Activated CD8-positive, alpha-beta T cell treated with anti-CD3 and anti-CD28 coated beads for 36 hours (primary cell): ENCODE measurements at regions of chr11 and their contacts with region 1.

Region 1: DNA sequence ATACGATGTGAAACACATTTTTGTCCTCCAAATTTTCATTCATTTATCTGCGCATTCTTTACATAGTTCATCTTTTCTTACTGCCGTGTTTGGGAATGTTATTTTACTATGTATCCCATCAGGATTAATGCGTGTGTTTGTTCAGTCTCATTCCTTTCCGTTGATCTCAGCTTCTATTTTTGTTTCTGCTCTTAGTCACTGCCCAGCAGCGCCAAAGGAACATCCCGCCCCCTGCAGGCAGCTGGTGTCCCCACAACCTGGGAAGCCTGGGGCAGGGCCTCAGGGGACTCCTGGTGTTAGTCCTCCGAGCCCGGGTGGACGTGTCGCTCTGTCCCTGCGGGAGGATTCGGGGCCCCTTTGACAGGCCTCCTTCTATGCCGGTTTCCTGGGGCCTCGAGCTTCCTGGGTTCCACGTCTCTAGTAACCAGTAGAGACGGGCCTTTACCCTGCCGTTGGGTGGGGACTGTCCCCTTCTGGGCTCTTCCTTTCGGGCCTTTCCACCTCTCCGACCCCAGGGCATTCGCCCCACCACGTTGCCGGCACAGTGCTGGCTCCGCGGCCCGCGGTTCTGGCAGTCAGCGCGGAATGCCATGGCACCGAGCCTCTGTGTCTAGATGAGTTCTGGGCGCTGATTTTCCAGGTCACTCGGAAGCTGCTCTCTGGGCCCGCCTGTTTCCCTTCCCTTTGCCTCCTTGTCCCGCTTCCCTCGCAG is 39.8 kb downstream of the WEE1 start:
- DNase-seq: peak; percentile 93
- ATAC-seq: peak; percentile 65
- H3K4me3 Mint-ChIP-seq: peak overlapping the region; percentile 77
- H3K27ac Mint-ChIP-seq: peak overlapping the region; percentile 99
- H3K4me1 Mint-ChIP-seq: peaks cover 40% of the 10 kb centered on the region
- H3K27me3 Mint-ChIP-seq: no peaks in the 10 kb centered on the region
- CTCF ChIP-seq: peak; percentile 82

Region 2: GRCh38 chr11:9438611-9439010 is 174.7 kb before region 1 on chr11:
- CTCF ChIA-PET with region 1: no interaction called
- POLR2A ChIA-PET with region 1: no interaction called
- intact Hi-C with region 1: no loop called
- DNase-seq: no peak
- ATAC-seq: no peak
- H3K4me3 Mint-ChIP-seq: no peak overlapping the region
- H3K27ac Mint-ChIP-seq: no peak overlapping the region
- H3K4me1 Mint-ChIP-seq: no peaks in the 10 kb centered on the region
- H3K27me3 Mint-ChIP-seq: no peaks in the 10 kb centered on the region
- CTCF ChIP-seq: no peak

Region 3: DNA sequence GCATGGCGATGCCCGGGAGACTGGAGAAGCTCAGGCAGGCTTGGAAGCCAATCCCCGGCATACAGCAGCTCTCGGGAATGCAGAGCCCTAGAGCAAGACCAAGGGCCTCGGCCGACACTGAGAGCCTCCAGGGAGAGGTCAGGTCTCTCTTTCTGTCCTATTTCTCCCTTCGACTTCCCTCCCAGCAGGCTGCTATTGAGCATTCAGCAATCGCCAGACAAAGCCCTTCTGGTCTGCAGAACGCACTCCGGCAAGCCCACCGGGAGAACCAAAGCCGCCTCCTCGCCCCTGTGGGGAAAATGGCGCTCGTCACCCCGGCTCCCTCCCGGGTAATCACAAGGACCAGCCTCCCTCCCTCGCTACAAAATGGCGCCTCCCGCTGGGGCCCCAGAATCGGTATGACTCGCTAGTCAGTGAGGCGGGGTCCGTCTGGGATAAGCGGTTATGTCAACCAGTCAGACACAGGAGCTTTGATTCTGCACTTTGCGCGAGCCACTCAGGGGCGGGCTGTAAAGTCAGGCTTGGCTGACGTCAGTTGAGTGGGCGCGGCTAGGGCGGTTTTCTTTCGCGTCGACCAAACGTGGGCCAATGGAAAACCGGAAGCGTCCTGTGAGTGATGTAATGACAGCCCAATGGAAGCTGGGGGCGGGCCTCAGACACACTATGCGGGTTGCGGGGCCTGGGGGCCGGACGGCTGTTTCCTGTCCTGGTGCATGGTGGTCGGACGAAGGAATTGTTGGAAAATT is 152.8 kb before region 1 on chr11 and contains the start of gene ZNF143:
- CTCF ChIA-PET with region 1: interaction called, 14 read pairs
- POLR2A ChIA-PET with region 1: no interaction called
- intact Hi-C with region 1: no loop called
- DNase-seq: peak; percentile 100
- ATAC-seq: peak; percentile 91
- H3K4me3 Mint-ChIP-seq: peak within 1 kb of the TSS; percentile 94
- H3K27ac Mint-ChIP-seq: peak within 1 kb of the TSS; percentile 98
- H3K4me1 Mint-ChIP-seq: peaks cover 22% of the 10 kb centered on the region
- H3K27me3 Mint-ChIP-seq: no peaks in the 10 kb centered on the region
- CTCF ChIP-seq: no peak
- total RNA-seq, gene ZNF143: 26.5 to 33.7 TPM

Region 4: GRCh38 chr11:9565822-9566560 is 47.3 kb before region 1 on chr11:
- CTCF ChIA-PET with region 1: interaction called, 11 read pairs
- POLR2A ChIA-PET with region 1: interaction called, 5 read pairs
- intact Hi-C with region 1: no loop called
- DNase-seq: peak; percentile 77
- ATAC-seq: peak; percentile 97
- H3K4me3 Mint-ChIP-seq: no peak overlapping the region
- H3K27ac Mint-ChIP-seq: peak overlapping the region; percentile 73
- H3K4me1 Mint-ChIP-seq: peaks cover 13% of the 10 kb centered on the region
- H3K27me3 Mint-ChIP-seq: peaks cover 3% of the 10 kb centered on the region
- CTCF ChIP-seq: no peak

Region 5: GRCh38 chr11:9594267-9595046 is 18.8 kb before region 1 on chr11:
- CTCF ChIA-PET with region 1: interaction called, 45 read pairs
- POLR2A ChIA-PET with region 1: interaction called, 8 read pairs
- intact Hi-C with region 1: no loop called
- DNase-seq: no peak
- ATAC-seq: no peak
- H3K4me3 Mint-ChIP-seq: no peak overlapping the region
- H3K27ac Mint-ChIP-seq: no peak overlapping the region
- H3K4me1 Mint-ChIP-seq: no peaks in the 10 kb centered on the region
- H3K27me3 Mint-ChIP-seq: no peaks in the 10 kb centered on the region
- CTCF ChIP-seq: no peak

Region 6: GRCh38 chr11:9626496-9627394 is 13.5 kb after region 1 on chr11:
- CTCF ChIA-PET with region 1: interaction called, 12 read pairs
- POLR2A ChIA-PET with region 1: interaction called, 4 read pairs
- intact Hi-C with region 1: no loop called
- DNase-seq: no peak
- ATAC-seq: no peak
- H3K4me3 Mint-ChIP-seq: no peak overlapping the region
- H3K27ac Mint-ChIP-seq: no peak overlapping the region
- H3K4me1 Mint-ChIP-seq: no peaks in the 10 kb centered on the region
- H3K27me3 Mint-ChIP-seq: no peaks in the 10 kb centered on the region
- CTCF ChIP-seq: no peak

Region 7: GRCh38 chr11:9757809-9758636 is 144.7 kb after region 1 on chr11:
- CTCF ChIA-PET with region 1: interaction called, 10 read pairs
- POLR2A ChIA-PET with region 1: interaction called, 6 read pairs
- intact Hi-C with region 1: no loop called
- DNase-seq: peak; percentile 95
- ATAC-seq: peak; percentile 64
- H3K4me3 Mint-ChIP-seq: peak overlapping the region; percentile 88
- H3K27ac Mint-ChIP-seq: peak overlapping the region; percentile 87
- H3K4me1 Mint-ChIP-seq: peaks cover 53% of the 10 kb centered on the region
- H3K27me3 Mint-ChIP-seq: no peaks in the 10 kb centered on the region
- CTCF ChIP-seq: peak; percentile 93

Region 8: DNA sequence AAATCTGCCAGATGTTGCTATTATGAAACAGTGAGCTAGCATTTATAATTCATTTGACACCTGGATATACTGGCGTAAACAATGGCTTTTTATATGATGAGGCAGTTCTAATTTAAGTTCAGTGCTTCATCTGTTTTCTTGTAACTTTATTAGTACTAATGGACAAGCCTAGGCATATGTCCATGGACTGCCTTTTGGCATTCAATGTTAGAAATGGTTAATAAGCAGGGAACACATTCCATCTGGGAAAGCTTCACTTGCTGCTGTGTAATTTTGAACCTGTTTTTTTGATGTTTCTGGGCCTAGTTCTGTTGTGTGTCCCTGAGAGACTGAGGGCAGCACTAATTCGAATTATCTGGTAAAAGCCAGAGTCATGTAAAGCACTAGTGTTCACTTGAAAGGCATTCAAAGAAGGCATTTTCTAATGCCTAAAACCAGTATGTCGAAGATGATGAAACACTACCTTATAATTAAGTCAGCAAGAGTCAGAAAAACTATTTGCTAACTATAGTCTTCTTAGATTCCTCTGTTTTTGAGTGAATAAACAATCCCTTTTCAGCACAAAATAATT is 189.1 kb after region 1 on chr11:
- CTCF ChIA-PET with region 1: no interaction called
- POLR2A ChIA-PET with region 1: no interaction called
- intact Hi-C with region 1: no loop called
- DNase-seq: no peak
- ATAC-seq: no peak
- H3K4me3 Mint-ChIP-seq: no peak overlapping the region
- H3K27ac Mint-ChIP-seq: peak overlapping the region; percentile 6
- H3K4me1 Mint-ChIP-seq: peaks cover 17% of the 10 kb centered on the region
- H3K27me3 Mint-ChIP-seq: no peaks in the 10 kb centered on the region
- CTCF ChIP-seq: no peak